ENCODE measurements at regions of chr5 and their contacts with region 1.

Region 1: GRCh38 chr5:173984218-173984617 is 4.8 kb upstream of the C5orf47 start:
- DNase-seq: peak; percentile 57
- ATAC-seq: peak; percentile 92
- H3K4me3 ChIP-seq: no peak overlapping the region
- H3K27ac ChIP-seq: no peak overlapping the region
- H3K4me1 ChIP-seq: no peaks in the 10 kb centered on the region
- H3K27me3 ChIP-seq: no peaks in the 10 kb centered on the region
- CTCF ChIP-seq: peak; percentile 94
- EP300 ChIP-seq: no peak
- POLR2A ChIP-seq: no peak
- RAD21 ChIP-seq: peak; percentile 84

Region 2: DNA sequence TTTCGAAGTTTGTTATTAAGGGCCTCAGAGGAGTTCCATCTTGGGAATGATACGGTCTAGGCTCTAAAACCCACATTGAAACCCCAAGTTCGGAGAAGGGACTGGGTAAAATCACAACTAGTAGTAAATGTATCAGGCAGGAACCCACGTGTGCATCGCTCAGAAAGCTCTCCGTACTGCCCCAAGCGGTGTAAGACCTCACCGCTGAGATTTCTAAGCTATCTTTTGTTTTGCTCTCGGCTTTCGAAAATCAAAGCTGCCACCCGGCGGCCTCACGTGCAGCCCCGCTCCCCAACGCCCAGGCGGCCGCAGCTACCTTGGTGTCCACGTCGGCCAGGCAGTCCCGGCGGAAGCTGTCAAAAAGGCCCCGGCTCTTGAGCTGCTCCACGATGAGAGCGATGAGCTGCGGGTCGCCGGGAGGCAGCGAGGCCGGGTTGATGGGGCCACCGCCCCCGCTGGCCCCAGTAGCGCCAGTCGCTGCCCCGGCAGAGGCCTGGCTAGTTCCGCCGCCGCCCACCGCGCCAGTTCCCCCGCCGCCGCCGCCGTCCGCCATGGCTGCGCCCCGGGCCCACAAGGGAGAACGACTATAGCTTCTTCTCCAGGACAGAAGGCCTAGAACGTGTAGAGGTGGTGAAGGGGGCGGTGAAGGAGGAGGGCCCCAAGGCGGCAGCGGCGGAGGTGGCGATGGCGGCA is 368.2 kb before region 1 on chr5:
- CTCF ChIA-PET with region 1: interaction called, 25 read pairs
- POLR2A ChIA-PET with region 1: interaction called, 4 read pairs
- in situ Hi-C with region 1: no loop called
- intact Hi-C with region 1: loop called (anchors 1 kb)
- DNase-seq: peak; percentile 76
- ATAC-seq: peak; percentile 78
- H3K4me3 ChIP-seq: peak overlapping the region; percentile 83 to 92 (median 86)
- H3K27ac ChIP-seq: peak overlapping the region; percentile 79
- H3K4me1 ChIP-seq: peaks cover 61% of the 10 kb centered on the region
- H3K27me3 ChIP-seq: no peaks in the 10 kb centered on the region; a peak in 1 of 5 replicates
- CTCF ChIP-seq: peak; percentile 57
- EP300 ChIP-seq: no peak
- POLR2A ChIP-seq: peak in 1 of 2 experiments; percentile 41; a peak in 1 of 4 replicates
- RAD21 ChIP-seq: no peak; the same call in 1 of the 2 replicates

Region 3: DNA sequence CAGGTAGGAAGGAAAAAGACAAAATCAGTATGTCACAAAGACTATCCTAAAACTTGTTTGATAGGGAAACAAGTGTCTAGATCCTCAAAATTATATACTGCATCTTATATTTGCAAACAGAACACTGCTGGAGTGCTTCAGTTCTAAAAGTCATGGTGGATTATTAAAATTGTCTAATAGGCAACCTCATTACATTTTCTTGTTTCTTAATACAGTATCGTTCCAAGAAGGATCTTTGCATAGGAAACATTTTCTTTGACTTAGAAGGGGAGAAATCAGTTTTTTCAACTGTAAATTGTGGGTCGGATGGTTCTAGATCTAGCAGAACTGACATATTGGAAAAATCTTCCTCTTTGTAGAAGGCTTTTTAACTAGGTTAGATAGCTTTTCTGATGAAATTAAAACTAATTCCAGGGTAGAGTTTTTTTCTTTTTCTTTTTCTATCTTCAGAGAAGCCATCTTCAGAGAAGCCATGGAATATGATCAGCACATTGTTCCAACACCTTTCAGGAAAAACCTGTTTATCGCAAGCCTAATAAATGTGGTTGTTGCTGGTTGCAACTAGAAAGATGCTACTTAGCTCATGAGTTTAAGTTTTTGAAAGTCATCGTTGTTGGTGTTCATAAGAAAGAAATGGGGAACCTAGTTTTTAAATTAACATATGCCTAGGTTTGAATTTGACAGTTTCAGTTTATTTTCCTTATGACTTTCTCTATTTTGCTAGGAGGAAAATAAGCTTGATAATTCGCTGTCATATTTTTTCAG is 88.6 kb before region 1 on chr5:
- CTCF ChIA-PET with region 1: no interaction called
- POLR2A ChIA-PET with region 1: no interaction called
- in situ Hi-C with region 1: no loop called
- intact Hi-C with region 1: no loop called
- DNase-seq: no peak
- ATAC-seq: no peak
- H3K4me3 ChIP-seq: peak overlapping the region in 1 of 3 experiments; percentile 31; a peak in 1 of 6 replicates
- H3K27ac ChIP-seq: no peak overlapping the region
- H3K4me1 ChIP-seq: peaks cover 40% of the 10 kb centered on the region
- H3K27me3 ChIP-seq: no peaks in the 10 kb centered on the region
- CTCF ChIP-seq: no peak
- EP300 ChIP-seq: no peak
- POLR2A ChIP-seq: no peak
- RAD21 ChIP-seq: no peak

Region 4: GRCh38 chr5:173907686-173908371 is 76.4 kb before region 1 on chr5:
- CTCF ChIA-PET with region 1: no interaction called
- POLR2A ChIA-PET with region 1: no interaction called
- in situ Hi-C with region 1: no loop called
- intact Hi-C with region 1: no loop called
- DNase-seq: no peak
- ATAC-seq: no peak
- H3K4me3 ChIP-seq: no peak overlapping the region
- H3K27ac ChIP-seq: no peak overlapping the region
- H3K4me1 ChIP-seq: peaks cover 25% of the 10 kb centered on the region
- H3K27me3 ChIP-seq: no peaks in the 10 kb centered on the region
- CTCF ChIP-seq: no peak
- EP300 ChIP-seq: no peak
- POLR2A ChIP-seq: no peak
- RAD21 ChIP-seq: no peak

Region 5: DNA sequence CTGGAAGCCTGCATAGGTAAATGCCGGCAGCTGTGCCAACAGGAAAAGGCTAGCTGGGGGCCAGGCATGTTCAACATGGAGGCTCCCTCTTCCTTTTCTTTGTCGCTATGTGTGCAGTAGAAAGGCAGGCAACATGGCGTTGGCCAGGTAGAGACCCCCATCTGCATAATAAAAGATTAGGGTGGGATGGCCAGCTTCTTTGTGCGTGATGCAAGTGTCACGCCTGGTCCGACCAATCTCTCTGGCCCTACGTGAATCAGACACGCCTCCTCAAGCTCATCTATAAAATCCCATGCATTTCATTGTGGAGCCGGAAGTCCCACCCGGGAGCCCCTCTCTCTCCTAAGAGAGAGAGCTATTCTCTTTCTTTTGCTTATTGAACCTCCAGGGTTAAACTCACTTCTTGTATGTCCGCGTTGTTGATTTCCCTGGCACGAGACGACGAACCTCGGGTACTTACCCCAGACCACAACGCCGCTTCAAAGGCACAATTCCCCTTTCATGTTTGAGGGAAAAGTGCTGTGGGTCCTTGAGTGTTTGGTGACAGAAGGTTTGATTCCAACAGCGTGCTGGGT is 20.3 kb before region 1 on chr5:
- CTCF ChIA-PET with region 1: no interaction called
- POLR2A ChIA-PET with region 1: no interaction called
- in situ Hi-C with region 1: no loop called
- intact Hi-C with region 1: no loop called
- DNase-seq: no peak
- ATAC-seq: no peak
- H3K4me3 ChIP-seq: no peak overlapping the region
- H3K27ac ChIP-seq: no peak overlapping the region
- H3K4me1 ChIP-seq: peaks cover 53% of the 10 kb centered on the region
- H3K27me3 ChIP-seq: no peaks in the 10 kb centered on the region
- CTCF ChIP-seq: no peak
- EP300 ChIP-seq: no peak
- POLR2A ChIP-seq: no peak
- RAD21 ChIP-seq: no peak